CD8-positive, alpha-beta memory T cell (primary cell): ENCODE measurements at regions of chr22 and their contacts with region 1.

Region 1: GRCh38 chr22:17742527-17742902 is 31.8 kb downstream of the BID start:
- DNase-seq: peak; percentile 44 to 75 (median 51)
- H3K4me3 ChIP-seq: no peak overlapping the region
- H3K4me3 Mint-ChIP-seq: no peak overlapping the region
- H3K27ac ChIP-seq: no peak overlapping the region
- H3K27ac Mint-ChIP-seq: peak overlapping the region in 4 of 8 donors; percentile 4 to 80 (median 26)
- H3K4me1 ChIP-seq: no peaks in the 10 kb centered on the region
- H3K4me1 Mint-ChIP-seq: peaks cover 7 to 16% (median 12%) of the 10 kb centered on the region in 3 donors
- H3K27me3 ChIP-seq: no peaks in the 10 kb centered on the region
- H3K27me3 Mint-ChIP-seq: no peaks in the 10 kb centered on the region

Region 2: DNA sequence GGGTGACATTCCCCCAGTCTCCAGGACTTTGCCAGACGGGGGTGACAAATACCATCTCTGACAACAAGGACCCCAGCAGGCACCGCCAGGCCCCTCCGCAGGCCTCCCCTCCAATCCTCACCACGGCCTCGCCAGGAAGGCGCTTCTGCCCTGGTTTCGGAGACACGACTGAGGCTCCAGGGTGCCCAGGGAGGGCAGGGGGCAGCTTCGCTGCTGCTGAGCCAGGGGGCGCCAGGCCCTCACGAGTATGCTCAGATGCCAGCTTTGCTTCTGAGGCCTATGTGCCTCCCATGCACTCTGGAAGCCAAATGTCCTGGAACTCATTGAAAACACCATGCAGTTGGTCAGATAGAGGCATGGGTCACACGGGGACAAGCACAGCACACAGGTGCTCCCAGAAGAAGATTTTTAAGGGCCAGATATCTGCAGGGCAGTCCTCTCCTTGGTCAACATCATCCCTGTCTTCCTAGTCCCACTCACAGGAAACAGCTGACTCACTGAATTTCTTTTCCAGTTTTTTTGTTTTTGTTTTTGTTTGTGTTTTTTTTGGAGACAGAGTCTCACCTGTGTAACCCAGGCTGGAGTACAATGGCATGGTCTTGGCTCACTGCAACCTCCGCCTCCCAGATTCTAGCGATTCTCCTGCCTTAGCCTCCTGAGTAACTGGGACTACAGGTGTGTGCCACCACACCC is 11.9 kb after region 1 on chr22:
- CTCF ChIA-PET with region 1: interaction called, 10 read pairs
- POLR2A ChIA-PET with region 1: no interaction called
- DNase-seq: peak in 1 of 5 donors; percentile 62
- H3K4me3 ChIP-seq: no peak overlapping the region
- H3K4me3 Mint-ChIP-seq: no peak overlapping the region
- H3K27ac ChIP-seq: no peak overlapping the region
- H3K27ac Mint-ChIP-seq: peak overlapping the region in 4 of 8 donors; percentile 21 to 77 (median 64)
- H3K4me1 ChIP-seq: no peaks in the 10 kb centered on the region
- H3K4me1 Mint-ChIP-seq: peaks cover 5 to 28% (median 9%) of the 10 kb centered on the region in 3 donors
- H3K27me3 ChIP-seq: no peaks in the 10 kb centered on the region
- H3K27me3 Mint-ChIP-seq: no peaks in the 10 kb centered on the region

Region 3: DNA sequence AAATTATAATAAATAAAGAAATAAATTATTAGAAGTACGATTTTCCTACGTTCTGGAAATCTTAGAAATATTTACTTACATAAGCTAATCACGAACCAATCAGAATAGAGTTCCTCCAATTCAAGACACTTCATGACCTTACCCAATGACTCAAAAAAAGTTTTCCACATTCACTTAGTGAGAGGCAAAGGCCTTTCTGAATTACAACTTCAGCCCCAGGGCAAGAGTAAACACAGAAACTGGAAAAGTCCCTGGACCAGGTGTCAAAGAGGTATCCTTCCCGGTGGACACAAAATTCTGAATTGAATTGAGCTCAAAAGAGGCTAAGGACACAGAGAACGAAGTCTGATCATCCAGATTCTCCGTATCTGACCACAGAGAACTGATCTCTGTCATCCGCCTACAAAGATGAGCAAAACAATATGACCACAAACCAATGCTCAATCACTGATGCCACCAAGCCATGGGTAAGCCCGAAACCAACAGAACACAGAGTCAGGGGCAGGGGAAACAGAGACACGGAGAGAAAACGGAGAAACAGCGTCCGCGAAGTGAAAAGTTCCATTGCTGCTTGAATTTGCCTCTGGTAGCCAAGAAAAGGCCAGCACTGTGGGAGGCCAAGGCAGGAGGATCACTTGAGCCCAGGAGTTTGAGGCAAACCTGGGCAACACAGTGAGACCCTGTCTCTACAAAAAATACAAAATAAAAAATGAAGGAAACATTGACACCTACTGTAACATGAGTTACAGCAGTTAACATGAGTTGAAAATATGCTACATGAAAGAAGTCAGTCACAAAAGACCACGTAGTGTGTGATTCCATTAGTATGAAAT is 24.9 kb after region 1 on chr22:
- CTCF ChIA-PET with region 1: interaction called, 13 read pairs
- POLR2A ChIA-PET with region 1: no interaction called
- DNase-seq: peak in 3 of 5 donors; percentile 67 to 73 (median 72)
- H3K4me3 ChIP-seq: peak overlapping the region; percentile 26
- H3K4me3 Mint-ChIP-seq: peak overlapping the region; percentile 48 to 79 (median 71)
- H3K27ac ChIP-seq: no peak overlapping the region
- H3K27ac Mint-ChIP-seq: peak overlapping the region; percentile 62 to 99 (median 90)
- H3K4me1 ChIP-seq: peaks cover 26% of the 10 kb centered on the region
- H3K4me1 Mint-ChIP-seq: peaks cover 42 to 58% (median 55%) of the 10 kb centered on the region in 3 donors
- H3K27me3 ChIP-seq: no peaks in the 10 kb centered on the region
- H3K27me3 Mint-ChIP-seq: no peaks in the 10 kb centered on the region

Region 4: DNA sequence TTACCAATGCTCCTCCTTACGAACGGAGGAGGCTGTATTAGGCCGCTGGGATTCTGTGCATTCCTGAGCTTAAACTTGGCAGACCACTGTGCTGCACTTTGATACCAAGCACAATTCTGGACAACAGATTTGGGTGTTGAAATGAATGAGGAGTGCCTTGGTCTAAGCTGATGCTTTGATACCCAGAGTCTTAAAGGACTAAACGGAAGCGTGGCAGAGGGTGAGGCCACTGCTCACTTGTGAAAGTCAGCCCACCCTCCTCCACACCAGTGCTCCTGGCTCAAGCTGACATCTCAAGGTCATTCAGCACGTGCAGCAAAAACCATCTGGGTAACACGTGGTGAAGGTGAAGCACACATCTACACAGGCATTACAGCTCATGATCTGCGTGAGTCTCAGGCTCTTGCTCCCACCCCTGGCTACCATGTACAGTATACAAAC is 196.0 kb after region 1 on chr22:
- CTCF ChIA-PET with region 1: no interaction called
- POLR2A ChIA-PET with region 1: no interaction called
- DNase-seq: no peak
- H3K4me3 ChIP-seq: no peak overlapping the region
- H3K4me3 Mint-ChIP-seq: no peak overlapping the region
- H3K27ac ChIP-seq: no peak overlapping the region
- H3K27ac Mint-ChIP-seq: no peak overlapping the region
- H3K4me1 ChIP-seq: no peaks in the 10 kb centered on the region
- H3K4me1 Mint-ChIP-seq: peaks cover 9 to 61% (median 33%) of the 10 kb centered on the region in 3 donors
- H3K27me3 ChIP-seq: no peaks in the 10 kb centered on the region
- H3K27me3 Mint-ChIP-seq: no peaks in the 10 kb centered on the region

Region 5: GRCh38 chr22:18077639-18078328 is 335.3 kb after region 1 on chr22 and contains the start of gene PEX26:
- CTCF ChIA-PET with region 1: interaction called, 23 read pairs
- POLR2A ChIA-PET with region 1: no interaction called
- DNase-seq: peak; percentile 91 to 96 (median 93)
- H3K4me3 ChIP-seq: peak within 1 kb of the TSS; percentile 93
- H3K4me3 Mint-ChIP-seq: peak within 1 kb of the TSS; percentile 91 to 99 (median 95)
- H3K27ac ChIP-seq: peak within 1 kb of the TSS; percentile 84
- H3K27ac Mint-ChIP-seq: peak within 1 kb of the TSS; percentile 92 to 100 (median 97)
- H3K4me1 ChIP-seq: peaks cover 37% of the 10 kb centered on the region
- H3K4me1 Mint-ChIP-seq: peaks cover 54 to 63% (median 62%) of the 10 kb centered on the region in 3 donors
- H3K27me3 ChIP-seq: no peaks in the 10 kb centered on the region
- H3K27me3 Mint-ChIP-seq: no peaks in the 10 kb centered on the region
- total RNA-seq, gene PEX26: 56.7 to 59.3 TPM